GM12878 (cell line): ENCODE measurements at regions of chr10 and their contacts with region 1.

Region 1: DNA sequence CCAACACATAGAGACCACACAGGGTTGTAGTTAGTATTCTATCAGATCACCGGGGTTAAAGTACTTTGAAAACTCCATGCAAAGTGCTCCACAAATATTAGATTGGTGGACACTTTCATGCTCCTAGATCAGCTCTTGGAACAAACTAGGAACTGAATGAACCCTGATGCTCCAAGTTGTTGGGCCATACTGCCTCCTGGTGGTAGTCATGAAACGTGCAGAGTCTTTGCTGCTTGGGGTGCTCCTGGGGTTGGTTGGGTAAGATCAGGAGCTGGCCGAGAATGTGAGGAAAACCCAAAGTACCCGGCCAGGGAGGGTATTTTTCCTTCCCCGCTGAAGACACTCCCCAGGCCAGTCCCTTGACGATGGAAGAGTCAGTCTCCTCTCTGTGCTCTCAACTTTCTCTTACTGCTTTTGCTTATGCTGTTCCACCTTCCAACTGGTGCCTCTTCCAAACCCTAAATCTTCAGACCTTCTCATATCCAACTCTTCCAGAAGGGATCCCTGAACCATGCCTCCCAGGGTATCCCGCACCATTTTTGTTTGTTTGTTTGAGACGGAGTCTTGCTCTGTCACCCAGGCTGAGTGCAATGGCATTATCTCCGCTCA is 920 bp upstream of the RPEL1 start:
- DNase-seq: peak; percentile 47
- ATAC-seq: peak; percentile 90
- H3K4me3 ChIP-seq: no peak overlapping the region
- H3K27ac ChIP-seq: no peak overlapping the region
- H3K4me1 ChIP-seq: peaks cover 15% of the 10 kb centered on the region
- H3K27me3 ChIP-seq: no peaks in the 10 kb centered on the region
- CTCF ChIP-seq: peak; percentile 93 to 97 (median 93)
- EP300 ChIP-seq: no peak
- POLR2A ChIP-seq: no peak
- RAD21 ChIP-seq: peak; percentile 98

Region 2: DNA sequence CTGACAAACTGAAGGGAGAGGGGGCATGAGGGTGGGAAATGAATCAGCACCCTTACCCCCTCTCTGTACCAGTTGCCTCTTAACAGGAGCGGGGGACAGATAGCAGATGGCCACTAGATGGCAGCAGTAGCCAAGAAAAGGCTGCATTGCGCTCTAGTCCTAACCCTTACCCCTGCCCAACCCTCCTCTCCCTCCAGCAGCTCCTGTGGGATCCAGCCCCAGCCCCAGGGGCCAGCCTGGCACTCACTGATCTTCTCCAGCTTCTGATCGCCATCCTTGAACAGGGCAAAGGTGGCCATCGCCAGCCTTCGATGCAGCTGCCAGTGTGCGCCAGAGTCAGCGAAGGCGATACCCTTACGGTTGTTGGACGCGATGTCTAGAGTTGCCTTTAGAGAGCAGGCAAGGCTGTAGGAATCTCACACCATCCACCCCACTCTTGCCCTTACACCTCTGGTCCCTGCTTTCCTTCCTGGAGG is 409.7 kb before region 1 on chr10:
- CTCF ChIA-PET with region 1: interaction called, 6 read pairs
- POLR2A ChIA-PET with region 1: no interaction called
- RAD21 ChIA-PET with region 1: interaction called, 4 read pairs
- SMC1A ChIA-PET with region 1: interaction called, 6 read pairs
- in situ Hi-C with region 1: loop called (anchors 5 kb)
- intact Hi-C with region 1: loop called (anchors 5 kb)
- DNase-seq: peak; percentile 20
- ATAC-seq: peak; percentile 100
- H3K4me3 ChIP-seq: no peak overlapping the region
- H3K27ac ChIP-seq: no peak overlapping the region
- H3K4me1 ChIP-seq: no peaks in the 10 kb centered on the region
- H3K27me3 ChIP-seq: 0 out of 4 replicates have a peak, but pooled peaks cover 0 to 2% of the 10 kb centered on the region in 2 experiments
- CTCF ChIP-seq: peak; percentile 81 to 94 (median 89)
- EP300 ChIP-seq: no peak
- POLR2A ChIP-seq: no peak
- RAD21 ChIP-seq: peak; percentile 88

Region 3: DNA sequence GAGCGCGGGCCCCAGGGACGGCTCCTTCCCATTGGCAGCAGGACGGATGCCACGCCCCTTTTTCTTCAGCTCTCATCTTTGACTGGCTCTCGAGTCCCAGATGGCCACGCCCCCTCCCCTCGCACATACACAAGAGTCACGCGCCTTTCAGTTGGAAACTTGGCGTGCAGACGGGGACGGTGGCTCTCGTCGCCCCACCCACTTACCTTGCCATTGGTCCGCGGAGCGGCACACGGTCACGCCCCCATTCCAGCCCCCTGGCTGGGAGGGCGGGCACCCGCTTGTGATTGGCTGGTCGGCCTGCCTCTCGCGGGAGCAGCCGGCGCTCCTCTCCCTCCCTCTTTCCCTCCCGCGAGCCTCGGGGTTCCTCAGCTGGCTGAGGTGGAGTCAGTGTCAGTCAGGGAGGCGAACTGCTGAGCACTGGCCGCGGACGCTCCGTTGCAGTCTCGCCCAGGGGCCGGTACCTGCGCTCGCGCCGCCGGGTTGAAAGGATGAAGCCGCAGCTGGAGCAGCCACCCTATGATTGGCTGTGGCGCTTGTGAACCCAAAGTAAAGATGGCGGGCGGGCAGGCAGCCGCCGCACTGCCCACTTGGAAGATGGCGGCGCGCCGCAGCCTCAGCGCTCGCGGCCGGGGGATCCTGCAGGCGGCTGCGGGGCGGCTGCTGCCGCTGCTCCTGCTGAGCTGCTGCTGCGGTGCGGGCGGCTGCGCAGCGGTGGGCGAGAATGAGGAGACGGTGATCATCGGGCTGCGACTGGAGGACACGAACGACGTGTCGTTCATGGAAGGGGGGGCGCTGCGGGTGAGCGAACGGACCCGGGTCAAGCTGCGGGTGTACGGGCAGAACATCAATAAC is 326.6 kb before region 1 on chr10 and contains the start of gene CNNM2:
- CTCF ChIA-PET with region 1: interaction called, 96 read pairs
- POLR2A ChIA-PET with region 1: interaction called, 8 read pairs
- RAD21 ChIA-PET with region 1: interaction called, 63 read pairs
- SMC1A ChIA-PET with region 1: interaction called, 50 read pairs
- in situ Hi-C with region 1: loop called (anchors 5 kb)
- intact Hi-C with region 1: loop called (anchors 1 kb)
- DNase-seq: peak; percentile 98
- ATAC-seq: peak; percentile 94
- H3K4me3 ChIP-seq: peak within 1 kb of the TSS; percentile 92
- H3K27ac ChIP-seq: peak within 1 kb of the TSS; percentile 72
- H3K4me1 ChIP-seq: peaks cover 16% of the 10 kb centered on the region
- H3K27me3 ChIP-seq: no peaks in the 10 kb centered on the region; a peak in 1 of 4 replicates
- CTCF ChIP-seq: no peak
- EP300 ChIP-seq: no peak
- POLR2A ChIP-seq: peak; percentile 90
- RAD21 ChIP-seq: no peak
- polyA plus RNA-seq, gene CNNM2: 0.18 to 0.33 TPM

Region 4: GRCh38 chr10:103069453-103070331 is 175.1 kb before region 1 on chr10:
- CTCF ChIA-PET with region 1: interaction called, 64 read pairs
- POLR2A ChIA-PET with region 1: no interaction called
- RAD21 ChIA-PET with region 1: interaction called, 20 read pairs
- SMC1A ChIA-PET with region 1: interaction called, 26 read pairs
- in situ Hi-C with region 1: loop called (anchors 10 kb)
- intact Hi-C with region 1: loop called (anchors 1 kb)
- DNase-seq: peak; percentile 46
- ATAC-seq: peak; percentile 87
- H3K4me3 ChIP-seq: 0 out of 2 replicates have a peak overlapping the region, but pooled peaks have one; percentile 2
- H3K27ac ChIP-seq: peak overlapping the region; percentile 73
- H3K4me1 ChIP-seq: peaks cover 37% of the 10 kb centered on the region
- H3K27me3 ChIP-seq: no peaks in the 10 kb centered on the region
- CTCF ChIP-seq: peak; percentile 69 to 82 (median 70)
- EP300 ChIP-seq: no peak
- POLR2A ChIP-seq: no peak
- RAD21 ChIP-seq: peak; percentile 88

Region 5: DNA sequence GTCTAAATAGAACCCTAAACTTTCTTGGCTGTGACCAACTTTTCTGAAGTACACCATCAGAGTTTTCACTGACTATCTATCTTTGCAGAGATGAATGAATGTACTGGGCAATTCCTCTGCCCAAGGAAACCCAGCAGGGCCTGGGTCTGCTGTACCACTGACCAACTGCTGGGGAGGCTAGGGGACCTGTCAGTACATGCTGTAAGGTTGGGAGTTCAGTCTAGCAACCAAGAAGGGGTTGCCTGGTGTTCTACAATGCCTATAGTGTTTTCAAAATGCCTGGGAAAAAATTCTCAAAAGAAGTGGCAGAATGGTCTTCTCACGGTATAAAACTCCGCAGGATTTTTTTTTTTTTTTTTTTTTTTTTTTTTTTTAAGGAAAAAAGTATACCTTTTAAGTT is 158.0 kb before region 1 on chr10:
- CTCF ChIA-PET with region 1: interaction called, 10 read pairs
- POLR2A ChIA-PET with region 1: no interaction called
- RAD21 ChIA-PET with region 1: interaction called, 4 read pairs
- SMC1A ChIA-PET with region 1: interaction called, 11 read pairs
- in situ Hi-C with region 1: no loop called
- intact Hi-C with region 1: loop called (anchors 5 kb)
- DNase-seq: no peak
- ATAC-seq: no peak
- H3K4me3 ChIP-seq: no peak overlapping the region
- H3K27ac ChIP-seq: no peak overlapping the region
- H3K4me1 ChIP-seq: no peaks in the 10 kb centered on the region
- H3K27me3 ChIP-seq: no peaks in the 10 kb centered on the region
- CTCF ChIP-seq: 0 out of 6 replicates have a peak, but pooled peaks of 1 of the 3 experiments have one; percentile 3
- EP300 ChIP-seq: no peak
- POLR2A ChIP-seq: no peak
- RAD21 ChIP-seq: peak; percentile 17; the same call in 1 of the 2 replicates

Region 6: DNA sequence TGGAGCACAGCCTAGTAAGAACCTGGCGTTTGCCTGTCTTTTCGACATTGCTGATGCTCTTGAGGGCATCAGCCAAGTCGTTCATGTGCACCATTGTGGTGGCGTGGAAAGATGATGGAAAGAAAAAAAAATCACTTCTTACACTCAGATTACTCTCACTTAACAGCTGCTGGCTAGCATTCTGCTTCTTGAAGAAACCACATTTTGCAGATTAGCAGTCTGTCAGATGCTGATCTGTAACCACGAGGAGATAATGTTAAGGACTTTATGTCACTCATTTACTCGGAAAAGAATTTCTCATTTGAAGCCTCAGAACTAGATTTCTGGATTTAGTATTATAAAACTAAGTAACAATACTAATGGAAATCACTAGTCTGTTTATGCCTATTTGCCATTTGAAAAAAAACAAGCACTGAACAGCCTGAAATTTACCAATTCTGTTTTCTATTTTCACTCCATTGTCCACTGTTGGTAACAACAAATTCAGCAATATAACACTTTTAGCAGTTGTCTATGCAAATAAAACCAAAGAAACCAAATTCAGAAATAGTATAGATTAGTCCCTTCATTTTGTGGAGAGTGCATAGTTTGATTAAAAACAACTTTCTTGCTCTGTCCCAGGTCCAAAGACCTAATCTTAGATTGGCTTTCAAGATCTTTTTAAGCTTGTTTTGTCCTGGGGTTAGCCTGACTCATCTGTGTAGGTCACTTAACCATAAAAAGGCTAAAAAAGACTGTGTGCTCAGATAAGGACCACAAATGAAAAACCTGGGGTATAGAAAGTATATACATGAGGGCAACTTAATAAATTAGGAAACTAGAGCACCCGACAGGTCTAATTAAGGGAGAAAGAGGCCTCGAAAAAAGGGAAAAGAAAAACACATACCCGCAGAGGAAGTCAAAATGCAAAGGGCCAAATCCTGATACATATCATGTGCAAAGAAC is 119.2 kb before region 1 on chr10:
- CTCF ChIA-PET with region 1: interaction called, 8 read pairs
- POLR2A ChIA-PET with region 1: no interaction called
- RAD21 ChIA-PET with region 1: interaction called, 3 read pairs
- SMC1A ChIA-PET with region 1: interaction called, 12 read pairs
- in situ Hi-C with region 1: no loop called
- intact Hi-C with region 1: loop called (anchors 1 kb)
- DNase-seq: peak; percentile 87
- ATAC-seq: peak; percentile 96
- H3K4me3 ChIP-seq: peak overlapping the region; percentile 21
- H3K27ac ChIP-seq: peak overlapping the region; percentile 67
- H3K4me1 ChIP-seq: peaks cover 17% of the 10 kb centered on the region
- H3K27me3 ChIP-seq: no peaks in the 10 kb centered on the region
- CTCF ChIP-seq: no peak
- EP300 ChIP-seq: peak; percentile 89 to 90
- POLR2A ChIP-seq: no peak
- RAD21 ChIP-seq: no peak

Region 7: DNA sequence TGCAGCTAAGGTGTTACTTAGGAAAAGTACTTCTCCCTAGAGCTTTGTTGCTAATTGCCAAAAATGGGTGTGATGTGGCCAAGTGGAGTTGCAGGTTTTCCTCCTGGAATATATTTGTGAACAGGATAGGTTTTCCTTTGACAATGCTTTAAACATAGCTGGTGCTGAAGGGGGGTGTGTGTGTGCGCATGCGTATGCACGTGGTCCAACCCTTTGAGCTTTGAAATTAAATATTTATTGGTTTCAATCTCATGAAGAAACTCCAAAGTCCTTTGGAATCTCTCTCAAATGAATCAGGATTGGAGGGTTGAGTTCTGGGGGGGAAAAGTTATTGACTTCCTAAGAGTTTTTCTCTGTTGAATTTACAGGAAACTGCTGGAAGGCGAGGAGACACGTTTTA is 43.2 kb after region 1 on chr10:
- CTCF ChIA-PET with region 1: no interaction called
- POLR2A ChIA-PET with region 1: no interaction called
- RAD21 ChIA-PET with region 1: no interaction called
- SMC1A ChIA-PET with region 1: no interaction called
- in situ Hi-C with region 1: no loop called
- intact Hi-C with region 1: no loop called
- DNase-seq: no peak
- ATAC-seq: no peak
- H3K4me3 ChIP-seq: no peak overlapping the region
- H3K27ac ChIP-seq: no peak overlapping the region
- H3K4me1 ChIP-seq: no peaks in the 10 kb centered on the region
- H3K27me3 ChIP-seq: no peaks in the 10 kb centered on the region; a peak in 1 of 4 replicates
- CTCF ChIP-seq: no peak
- EP300 ChIP-seq: no peak
- POLR2A ChIP-seq: no peak
- RAD21 ChIP-seq: no peak

Region 8: GRCh38 chr10:103333925-103334520 is 89.3 kb after region 1 on chr10:
- CTCF ChIA-PET with region 1: interaction called, 5 read pairs
- POLR2A ChIA-PET with region 1: no interaction called
- RAD21 ChIA-PET with region 1: no interaction called
- SMC1A ChIA-PET with region 1: interaction called, 10 read pairs
- in situ Hi-C with region 1: no loop called
- intact Hi-C with region 1: no loop called
- DNase-seq: no peak
- ATAC-seq: 0 out of 3 replicates have a peak, but pooled peaks have one; percentile 38
- H3K4me3 ChIP-seq: no peak overlapping the region
- H3K27ac ChIP-seq: no peak overlapping the region
- H3K4me1 ChIP-seq: no peaks in the 10 kb centered on the region
- H3K27me3 ChIP-seq: no peaks in the 10 kb centered on the region
- CTCF ChIP-seq: peak in 2 of 3 experiments; percentile 43 to 60; a peak in 4 of 6 replicates
- EP300 ChIP-seq: no peak
- POLR2A ChIP-seq: no peak
- RAD21 ChIP-seq: peak; percentile 27; the same call in 1 of the 2 replicates

Region 9: DNA sequence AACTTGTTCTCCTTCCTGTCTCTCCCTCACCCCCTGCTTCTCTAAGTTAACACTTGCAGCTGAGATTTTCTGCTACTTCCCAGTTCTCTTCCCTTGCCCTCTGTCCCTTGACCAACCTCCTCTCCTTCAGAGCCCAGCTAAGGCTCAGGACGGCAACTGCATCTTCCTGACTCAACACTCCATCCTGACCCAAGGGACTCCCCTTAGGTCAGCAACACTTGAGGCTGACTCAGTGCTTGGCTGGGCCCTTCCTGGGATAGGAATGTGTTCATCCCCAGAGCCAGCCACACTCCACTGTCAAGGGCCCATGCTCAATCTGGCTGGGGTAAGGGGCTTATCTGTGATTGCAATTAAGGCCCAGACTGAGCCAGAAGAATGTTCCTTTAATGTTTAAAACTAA is 204.0 kb after region 1 on chr10:
- CTCF ChIA-PET with region 1: no interaction called
- POLR2A ChIA-PET with region 1: no interaction called
- RAD21 ChIA-PET with region 1: no interaction called
- SMC1A ChIA-PET with region 1: no interaction called
- in situ Hi-C with region 1: no loop called
- intact Hi-C with region 1: no loop called
- DNase-seq: no peak
- ATAC-seq: no peak
- H3K4me3 ChIP-seq: peak overlapping the region; percentile 45; the same call in 1 of the 2 replicates
- H3K27ac ChIP-seq: no peak overlapping the region
- H3K4me1 ChIP-seq: peaks cover 24% of the 10 kb centered on the region
- H3K27me3 ChIP-seq: no peaks in the 10 kb centered on the region
- CTCF ChIP-seq: no peak
- EP300 ChIP-seq: no peak
- POLR2A ChIP-seq: no peak; the same call in 1 of the 2 replicates
- RAD21 ChIP-seq: no peak